ENCODE measurements at regions of chr5 and their contacts with region 1.

Region 1: DNA sequence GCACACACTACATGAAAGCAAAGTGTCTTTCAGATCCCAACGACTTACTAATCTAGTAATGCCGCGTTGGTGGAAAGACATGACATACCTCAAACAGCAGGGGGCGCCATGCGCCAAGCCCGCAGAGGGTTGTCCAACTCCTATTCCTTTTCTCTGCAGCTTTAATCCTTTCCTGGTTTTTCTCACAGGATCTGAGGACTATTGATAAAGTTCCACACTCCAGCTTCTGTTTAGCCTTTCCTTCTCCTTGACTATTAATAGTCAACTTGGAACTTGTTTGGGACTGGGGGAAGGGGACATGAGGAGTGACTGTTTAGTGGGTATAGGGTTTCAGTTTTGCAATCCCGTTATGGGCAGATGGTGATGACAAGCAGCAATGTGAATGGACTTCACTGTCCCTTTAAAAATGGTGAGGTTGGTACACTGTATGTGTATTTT is 62.9 kb downstream of the OTULIN start:
- DNase-seq: peak; percentile 22 to 84 (median 65)
- ATAC-seq: peak; percentile 69 to 73 (median 70)
- H3K4me3 ChIP-seq: no peak overlapping the region
- H3K4me3 Mint-ChIP-seq: no peak overlapping the region
- H3K27ac ChIP-seq: peak overlapping the region; percentile 1
- H3K27ac Mint-ChIP-seq: peak overlapping the region; percentile 52 to 59
- H3K4me1 ChIP-seq: no peaks in the 10 kb centered on the region
- H3K4me1 Mint-ChIP-seq: peaks cover 0 to 20% (median 17%) of the 10 kb centered on the region in 3 donors
- H3K27me3 ChIP-seq: no peaks in the 10 kb centered on the region
- H3K27me3 Mint-ChIP-seq: no peaks in the 10 kb centered on the region

Region 2: DNA sequence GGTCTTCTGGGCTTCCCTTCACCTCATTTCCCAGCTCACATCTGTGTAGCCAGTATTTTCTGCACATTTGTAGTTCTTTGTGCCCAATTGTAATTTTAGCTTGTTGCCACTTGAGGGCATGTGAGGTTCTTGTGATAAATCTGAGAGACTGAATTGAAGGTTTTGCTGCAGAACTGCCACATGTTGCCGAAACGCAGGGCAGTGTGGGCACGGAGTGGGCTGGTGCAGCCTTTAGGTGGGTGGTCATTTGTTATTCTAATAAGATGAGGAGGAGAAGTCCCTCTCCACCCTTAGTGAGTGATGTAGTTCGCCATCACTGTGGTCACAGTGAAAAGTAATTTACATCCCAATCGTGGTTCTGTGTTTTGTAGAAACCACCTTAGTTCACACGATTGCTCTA is 41.7 kb before region 1 on chr5:
- CTCF ChIA-PET with region 1: interaction called, 6 to 14 read pairs
- POLR2A ChIA-PET with region 1: no interaction called
- DNase-seq: peak in 20 of 35 experiments; percentile 8 to 73 (median 31)
- ATAC-seq: peak; percentile 81 to 85 (median 83)
- H3K4me3 ChIP-seq: no peak overlapping the region
- H3K4me3 Mint-ChIP-seq: peak overlapping the region; percentile 41 to 57 (median 42)
- H3K27ac ChIP-seq: no peak overlapping the region
- H3K27ac Mint-ChIP-seq: peak overlapping the region; percentile 50 to 88
- H3K4me1 ChIP-seq: peaks cover 3 to 8% of the 10 kb centered on the region in 2 experiments
- H3K4me1 Mint-ChIP-seq: peaks cover 12 to 18% (median 14%) of the 10 kb centered on the region in 3 donors
- H3K27me3 ChIP-seq: no peaks in the 10 kb centered on the region
- H3K27me3 Mint-ChIP-seq: no peaks in the 10 kb centered on the region

Region 3: GRCh38 chr5:14706615-14707021 is 20.8 kb before region 1 on chr5:
- CTCF ChIA-PET with region 1: interaction called, 11 to 15 read pairs
- POLR2A ChIA-PET with region 1: no interaction called
- DNase-seq: peak; percentile 13 to 82 (median 49)
- ATAC-seq: peak; percentile 96 to 97 (median 97)
- H3K4me3 ChIP-seq: no peak overlapping the region
- H3K4me3 Mint-ChIP-seq: peak overlapping the region; percentile 69 to 81 (median 76)
- H3K27ac ChIP-seq: peak overlapping the region; percentile 81
- H3K27ac Mint-ChIP-seq: peak overlapping the region; percentile 99 to 100
- H3K4me1 ChIP-seq: peaks cover 39 to 69% of the 10 kb centered on the region in 2 experiments
- H3K4me1 Mint-ChIP-seq: peaks cover 87 to 88% (median 88%) of the 10 kb centered on the region in 3 donors
- H3K27me3 ChIP-seq: no peaks in the 10 kb centered on the region
- H3K27me3 Mint-ChIP-seq: no peaks in the 10 kb centered on the region

Region 4: DNA sequence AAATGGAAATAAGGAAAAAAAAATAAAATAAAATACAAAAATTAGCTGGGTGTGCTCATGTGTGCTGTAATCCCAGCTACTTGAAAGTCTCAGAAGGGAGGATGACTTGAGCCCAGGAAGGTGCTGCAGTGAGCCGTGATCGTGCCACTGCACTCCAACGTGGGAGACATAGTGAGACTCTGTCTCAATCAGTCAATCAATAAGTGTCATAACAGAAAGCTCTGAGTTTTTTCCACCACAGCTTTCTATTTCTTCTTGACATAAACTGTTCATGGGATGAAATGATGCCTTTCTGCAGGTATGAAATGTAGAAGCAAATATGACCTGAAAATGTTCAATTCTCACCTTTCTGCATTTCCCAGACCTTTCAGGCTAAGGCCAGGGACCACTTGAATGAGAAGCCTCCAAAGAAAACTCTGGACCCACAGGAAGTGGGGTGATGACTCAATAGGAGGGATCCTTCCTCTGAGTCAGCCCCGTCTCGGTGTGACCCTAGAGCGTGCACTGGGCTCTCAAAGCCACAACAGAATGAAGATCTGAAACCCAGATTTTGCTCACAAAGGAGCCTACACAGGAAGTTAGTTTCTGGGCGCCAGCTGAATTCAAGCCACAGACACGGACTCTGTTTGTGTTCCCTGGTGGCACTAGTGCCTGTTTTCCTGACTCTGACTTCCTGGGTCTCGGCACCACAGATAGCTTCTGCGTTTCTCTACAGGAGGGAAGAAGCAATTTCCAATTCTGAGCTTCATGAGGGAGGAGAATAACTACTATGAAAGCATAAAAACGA is 82.1 kb after region 1 on chr5:
- CTCF ChIA-PET with region 1: interaction called in 1 of 2 experiments, 11 read pairs
- POLR2A ChIA-PET with region 1: no interaction called
- DNase-seq: peak; percentile 30 to 79 (median 52)
- ATAC-seq: peak; percentile 95 to 97 (median 96)
- H3K4me3 ChIP-seq: peak overlapping the region; percentile 21 to 59
- H3K4me3 Mint-ChIP-seq: peak overlapping the region; percentile 67 to 82 (median 79)
- H3K27ac ChIP-seq: peak overlapping the region; percentile 48
- H3K27ac Mint-ChIP-seq: peak overlapping the region; percentile 93 to 97
- H3K4me1 ChIP-seq: peaks cover 38 to 39% of the 10 kb centered on the region in 2 experiments
- H3K4me1 Mint-ChIP-seq: peaks cover 58 to 73% (median 68%) of the 10 kb centered on the region in 3 donors
- H3K27me3 ChIP-seq: no peaks in the 10 kb centered on the region
- H3K27me3 Mint-ChIP-seq: no peaks in the 10 kb centered on the region

Region 5: DNA sequence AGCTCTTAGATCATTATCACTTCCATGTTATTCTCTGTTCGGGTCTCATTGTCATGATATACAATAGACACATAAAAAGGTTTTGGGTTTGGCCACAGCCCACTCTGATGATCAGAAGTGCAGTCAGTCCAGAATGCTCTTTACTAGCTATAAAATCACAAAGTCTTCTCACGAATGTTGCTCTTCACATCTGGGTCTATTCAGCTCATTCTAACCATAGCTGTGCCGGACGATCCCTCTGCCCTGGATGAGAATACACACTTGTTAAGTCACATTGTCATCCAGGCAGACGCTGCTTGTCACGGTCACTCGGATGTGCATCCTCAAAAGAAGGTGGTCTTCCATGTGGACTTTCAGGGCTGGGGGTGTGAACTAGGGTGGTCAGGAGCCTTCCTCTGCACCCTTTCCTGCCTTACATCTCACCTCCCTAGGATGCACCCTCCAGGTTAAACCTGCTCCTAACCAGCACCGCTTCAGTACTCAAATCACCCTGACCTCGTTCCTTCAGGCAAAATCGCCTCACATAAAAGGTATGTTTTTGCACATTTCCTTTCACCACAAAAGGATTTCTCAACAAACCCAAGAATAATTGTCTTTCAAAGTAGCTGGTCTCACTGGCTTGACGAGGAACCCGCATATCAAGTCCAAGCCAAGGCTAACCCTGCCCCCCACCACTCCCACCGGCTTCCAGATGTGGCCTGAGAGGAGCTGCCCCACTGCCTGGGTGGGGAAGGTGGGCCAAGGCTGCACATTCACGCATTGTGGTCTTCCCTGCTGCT is 122.3 kb after region 1 on chr5:
- CTCF ChIA-PET with region 1: no interaction called
- POLR2A ChIA-PET with region 1: no interaction called
- DNase-seq: no peak
- ATAC-seq: no peak
- H3K4me3 ChIP-seq: no peak overlapping the region
- H3K4me3 Mint-ChIP-seq: no peak overlapping the region
- H3K27ac ChIP-seq: no peak overlapping the region
- H3K27ac Mint-ChIP-seq: peak overlapping the region in 1 of 2 donors; percentile 5
- H3K4me1 ChIP-seq: no peaks in the 10 kb centered on the region
- H3K4me1 Mint-ChIP-seq: peaks cover 28 to 52% (median 34%) of the 10 kb centered on the region in 3 donors
- H3K27me3 ChIP-seq: no peaks in the 10 kb centered on the region
- H3K27me3 Mint-ChIP-seq: no peaks in the 10 kb centered on the region

Measured in T-cell (primary cell).